Naive thymus-derived CD4-positive, alpha-beta T cell (primary cell): ENCODE measurements at regions of chr11 and their contacts with region 1.

Region 1: DNA sequence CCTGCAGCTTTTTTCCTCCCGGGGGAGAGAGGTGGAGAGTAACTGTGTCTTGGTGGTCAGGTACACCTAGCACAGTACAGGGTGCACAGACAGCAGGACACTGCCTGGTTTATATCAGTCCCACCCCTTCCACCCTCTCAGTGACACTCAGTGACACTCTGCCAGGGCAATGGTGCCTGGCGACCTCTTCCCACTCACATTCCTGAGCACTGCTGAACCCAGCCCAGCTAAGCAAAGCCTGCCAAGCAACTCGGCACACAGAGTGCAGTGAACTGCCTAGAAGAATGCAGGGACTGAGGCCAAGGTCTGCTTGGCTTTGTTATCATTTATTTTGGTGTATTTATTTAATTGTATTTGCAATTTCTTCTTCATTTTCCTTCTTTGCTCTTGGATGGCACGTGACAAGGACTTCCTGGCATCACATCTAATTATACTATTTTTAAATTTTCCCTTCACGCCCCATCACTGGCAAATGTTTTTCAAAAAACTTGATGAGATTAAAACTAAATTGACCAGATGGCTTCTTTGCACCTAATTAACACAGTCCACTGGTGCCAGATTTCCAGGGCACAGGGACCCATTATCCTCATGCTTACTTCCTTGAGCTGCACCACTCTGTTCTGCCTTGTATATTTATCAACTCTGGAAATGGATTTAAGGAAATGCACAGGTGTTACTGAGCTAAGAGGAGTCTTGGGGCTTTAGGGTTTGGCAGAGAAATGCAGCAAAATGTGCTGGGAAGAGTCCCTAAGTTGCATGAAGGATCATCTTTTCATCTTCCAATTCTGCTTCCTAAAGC is 205.6 kb downstream of the ADAMTS15 start:
- DNase-seq: no peak
- ATAC-seq: no peak
- H3K4me3 ChIP-seq: no peak overlapping the region
- H3K4me3 Mint-ChIP-seq: no peak overlapping the region
- H3K27ac ChIP-seq: no peak overlapping the region
- H3K27ac Mint-ChIP-seq: no peak overlapping the region
- H3K4me1 ChIP-seq: no peaks in the 10 kb centered on the region
- H3K4me1 Mint-ChIP-seq: no peaks in the 10 kb centered on the region
- H3K27me3 ChIP-seq: no peaks in the 10 kb centered on the region
- H3K27me3 Mint-ChIP-seq: peaks cover 0 to 16% (median 13%) of the 10 kb centered on the region in 5 donors

Region 2: DNA sequence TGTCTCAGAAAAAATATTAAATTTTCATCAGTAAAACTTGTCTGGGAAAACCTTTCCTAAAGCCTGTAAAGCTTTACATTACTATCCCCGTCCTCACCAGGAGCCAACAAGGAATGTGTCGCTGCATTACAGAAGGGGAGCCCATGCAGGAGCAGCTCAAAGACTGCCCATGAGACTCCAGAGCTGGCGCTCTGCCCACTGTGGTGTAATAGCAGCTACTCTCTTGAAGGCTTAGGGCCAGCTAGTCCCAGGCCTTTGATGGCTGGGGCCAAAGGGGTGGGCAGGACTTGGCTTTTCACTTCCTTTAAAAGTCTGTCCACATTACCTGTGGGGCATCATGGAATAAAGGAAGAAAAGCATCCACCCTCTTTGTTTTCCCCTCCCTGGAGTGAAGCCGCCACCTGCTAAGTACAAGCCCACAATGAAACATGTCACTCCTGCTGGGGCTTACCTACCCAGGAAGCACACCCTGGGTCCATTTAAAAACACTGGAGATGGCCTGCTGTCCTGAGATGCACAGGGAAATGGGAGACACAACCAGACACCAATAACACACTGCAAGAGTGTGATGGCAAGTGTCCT is 54.9 kb before region 1 on chr11:
- CTCF ChIA-PET with region 1: no interaction called
- POLR2A ChIA-PET with region 1: no interaction called
- intact Hi-C with region 1: loop called in 1 of 2 experiments (anchors 10 kb)
- DNase-seq: no peak
- ATAC-seq: no peak
- H3K4me3 ChIP-seq: no peak overlapping the region
- H3K4me3 Mint-ChIP-seq: no peak overlapping the region
- H3K27ac ChIP-seq: no peak overlapping the region
- H3K27ac Mint-ChIP-seq: no peak overlapping the region
- H3K4me1 ChIP-seq: no peaks in the 10 kb centered on the region
- H3K4me1 Mint-ChIP-seq: no peaks in the 10 kb centered on the region
- H3K27me3 ChIP-seq: no peaks in the 10 kb centered on the region
- H3K27me3 Mint-ChIP-seq: peaks cover 0 to 9% (median 0%) of the 10 kb centered on the region in 5 donors

Region 3: DNA sequence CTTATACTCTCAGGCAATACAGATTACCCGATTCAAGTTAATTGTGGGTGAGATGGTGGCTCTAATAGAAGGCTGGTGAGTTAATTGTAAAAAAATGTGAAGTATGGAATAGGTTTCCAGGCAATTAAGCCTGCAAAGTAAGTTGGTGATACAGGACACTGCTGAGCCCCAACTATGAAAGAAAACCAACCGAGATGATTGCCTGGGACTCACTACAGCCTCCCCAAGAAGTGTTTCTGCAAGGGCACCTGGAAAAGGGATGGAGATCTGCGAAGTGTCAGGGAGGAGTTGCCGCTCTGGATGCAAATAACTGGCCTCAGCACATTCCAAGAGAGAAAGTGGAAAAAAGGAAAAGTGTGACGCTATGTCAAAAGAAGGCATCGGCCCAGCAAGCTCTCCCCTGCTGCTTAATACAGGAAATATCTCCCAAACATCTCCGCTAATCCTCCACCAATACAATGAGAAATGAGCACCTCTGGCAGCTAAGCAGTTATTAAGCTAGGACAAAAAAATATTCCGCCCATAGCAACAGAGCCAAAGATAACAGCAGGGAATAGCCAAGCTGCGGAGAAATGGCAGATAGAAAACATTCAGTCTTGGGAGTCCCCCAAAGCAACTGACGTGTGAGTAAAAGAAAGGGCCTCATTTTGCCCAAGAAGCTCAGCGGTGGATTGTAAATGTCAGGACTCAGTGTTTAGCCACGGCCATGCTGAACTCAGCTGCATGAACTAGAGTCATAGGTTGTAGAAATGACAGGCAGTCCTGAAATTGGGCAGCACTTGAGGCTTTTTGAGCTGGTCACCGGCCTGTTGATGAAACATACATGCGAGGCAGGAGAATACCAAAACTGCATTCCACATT is 128.6 kb after region 1 on chr11:
- CTCF ChIA-PET with region 1: no interaction called
- POLR2A ChIA-PET with region 1: no interaction called
- intact Hi-C with region 1: no loop called
- DNase-seq: no peak
- ATAC-seq: no peak
- H3K4me3 ChIP-seq: no peak overlapping the region
- H3K4me3 Mint-ChIP-seq: no peak overlapping the region
- H3K27ac ChIP-seq: no peak overlapping the region
- H3K27ac Mint-ChIP-seq: no peak overlapping the region
- H3K4me1 ChIP-seq: no peaks in the 10 kb centered on the region
- H3K4me1 Mint-ChIP-seq: no peaks in the 10 kb centered on the region
- H3K27me3 ChIP-seq: no peaks in the 10 kb centered on the region
- H3K27me3 Mint-ChIP-seq: peaks cover 0 to 15% (median 3%) of the 10 kb centered on the region in 5 donors

Region 4: DNA sequence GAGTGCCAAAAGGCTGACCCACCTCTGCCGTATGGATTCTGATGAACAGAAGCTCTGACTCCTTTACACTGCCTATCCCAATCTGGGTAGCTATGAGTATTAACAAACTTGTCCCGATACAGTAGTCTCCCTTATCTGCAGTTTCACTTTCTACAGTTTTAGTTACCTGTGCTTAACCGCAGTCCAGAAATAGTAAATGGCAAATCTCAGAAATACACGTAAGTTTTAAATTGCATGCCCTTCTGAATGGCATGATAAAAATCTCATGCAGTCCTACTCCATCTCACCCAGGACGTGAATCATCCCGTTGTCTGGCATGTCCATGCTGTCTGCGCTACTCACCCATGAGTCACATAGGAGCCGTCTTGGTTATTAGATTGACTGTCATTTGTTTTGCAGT is 193.5 kb after region 1 on chr11:
- CTCF ChIA-PET with region 1: no interaction called
- POLR2A ChIA-PET with region 1: no interaction called
- intact Hi-C with region 1: no loop called
- DNase-seq: no peak
- ATAC-seq: no peak
- H3K4me3 ChIP-seq: no peak overlapping the region
- H3K4me3 Mint-ChIP-seq: no peak overlapping the region
- H3K27ac ChIP-seq: no peak overlapping the region
- H3K27ac Mint-ChIP-seq: no peak overlapping the region
- H3K4me1 ChIP-seq: no peaks in the 10 kb centered on the region
- H3K4me1 Mint-ChIP-seq: no peaks in the 10 kb centered on the region
- H3K27me3 ChIP-seq: no peaks in the 10 kb centered on the region
- H3K27me3 Mint-ChIP-seq: peaks cover 5 to 17% (median 10%) of the 10 kb centered on the region in 5 donors